K562 (cell line): ENCODE measurements at regions of chr12 and their contacts with region 1.

Region 1: GRCh38 chr12:101792051-101792931 is 38.5 kb downstream of the GNPTAB start:
- DNase-seq: no peak
- ATAC-seq: peak; percentile 55; the same call in 2 of the 3 replicates
- H3K4me3 ChIP-seq: no peak overlapping the region
- H3K27ac ChIP-seq: no peak overlapping the region; the same call in 2 of the 3 replicates
- H3K4me1 ChIP-seq: peaks cover 0 to 21% of the 10 kb centered on the region in 2 experiments; a peak in 3 of 5 replicates
- H3K27me3 ChIP-seq: no peaks in the 10 kb centered on the region
- CTCF ChIP-seq: peak in 2 of 3 experiments; percentile 19 to 43; a peak in 2 of 6 replicates
- EP300 ChIP-seq: no peak
- POLR2A ChIP-seq: no peak
- RAD21 ChIP-seq: peak in 1 of 2 experiments; percentile 48; a peak in 3 of 4 replicates

Region 2: DNA sequence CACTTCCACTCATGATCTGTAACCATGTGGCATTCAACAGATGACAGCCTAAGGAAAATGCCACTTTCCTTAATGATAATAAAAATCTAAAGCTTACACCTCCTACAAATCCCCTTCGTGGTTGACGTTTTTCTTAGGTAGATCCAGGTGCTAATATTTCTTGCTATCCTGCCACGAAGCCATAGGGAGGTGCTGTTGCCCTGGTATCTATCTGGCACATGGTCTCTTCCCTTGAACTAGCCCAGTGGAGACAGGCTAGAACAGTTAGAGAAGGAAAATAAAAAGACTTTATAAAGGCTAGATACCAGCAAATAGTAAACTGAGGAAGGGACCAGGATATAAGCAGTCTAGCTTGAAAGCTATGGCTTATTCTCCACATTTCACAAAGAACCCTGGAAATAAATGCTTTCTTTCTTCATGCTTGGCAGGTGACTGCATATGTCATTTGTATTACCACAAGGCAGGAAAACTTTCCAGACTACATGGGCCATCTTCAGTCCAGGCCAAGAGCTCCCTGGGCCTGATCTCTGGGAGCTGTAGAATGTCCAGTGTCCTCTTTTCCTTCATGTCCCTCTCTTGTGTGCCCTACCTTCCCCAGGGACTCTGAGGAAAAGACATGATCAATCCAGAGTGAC is 301.9 kb before region 1 on chr12:
- CTCF ChIA-PET with region 1: no interaction called
- POLR2A ChIA-PET with region 1: no interaction called
- in situ Hi-C with region 1: no loop called
- intact Hi-C with region 1: no loop called
- DNase-seq: peak in 2 of 4 experiments; percentile 18 to 21
- ATAC-seq: peak; percentile 83
- H3K4me3 ChIP-seq: no peak overlapping the region
- H3K27ac ChIP-seq: no peak overlapping the region
- H3K4me1 ChIP-seq: no peaks in the 10 kb centered on the region
- H3K27me3 ChIP-seq: peaks cover 0 to 6% of the 10 kb centered on the region in 2 experiments; a peak in 2 of 5 replicates
- CTCF ChIP-seq: peak; percentile 46 to 54 (median 50); a peak in 4 of 6 replicates
- EP300 ChIP-seq: no peak
- POLR2A ChIP-seq: no peak
- RAD21 ChIP-seq: peak; percentile 12 to 54; a peak in 2 of 4 replicates

Region 3: DNA sequence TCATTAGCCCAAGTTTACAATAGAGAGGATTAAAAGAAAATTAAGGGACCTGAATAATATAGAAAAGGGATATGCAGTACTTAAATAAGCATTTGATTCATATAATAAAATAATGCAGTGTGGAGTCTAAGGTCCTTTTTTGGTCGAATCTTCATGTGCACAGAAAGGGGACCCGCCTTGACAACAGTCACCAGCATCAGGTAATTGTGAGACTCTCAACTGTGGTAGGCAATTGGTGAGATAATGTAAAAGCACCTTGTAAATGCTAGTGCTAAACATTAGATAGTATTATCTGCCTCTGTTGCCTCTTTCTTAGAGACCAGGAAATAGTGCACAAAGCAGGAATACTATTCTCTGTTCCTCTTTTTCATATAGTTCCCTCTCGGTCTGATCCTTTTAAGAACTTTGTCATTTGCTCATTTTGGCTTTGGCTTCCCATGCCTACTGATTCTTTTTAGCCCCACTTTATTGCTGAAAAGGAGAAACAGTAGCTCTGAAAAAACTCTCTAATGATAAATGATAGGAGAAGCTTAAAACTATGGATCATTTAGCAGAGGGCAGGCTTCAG is 77.3 kb before region 1 on chr12:
- CTCF ChIA-PET with region 1: no interaction called
- POLR2A ChIA-PET with region 1: no interaction called
- in situ Hi-C with region 1: no loop called
- intact Hi-C with region 1: no loop called
- DNase-seq: no peak
- ATAC-seq: no peak
- H3K4me3 ChIP-seq: no peak overlapping the region
- H3K27ac ChIP-seq: no peak overlapping the region
- H3K4me1 ChIP-seq: peaks cover 3 to 14% of the 10 kb centered on the region in 2 experiments; a peak in 3 of 5 replicates
- H3K27me3 ChIP-seq: no peaks in the 10 kb centered on the region
- CTCF ChIP-seq: no peak
- EP300 ChIP-seq: no peak
- POLR2A ChIP-seq: no peak
- RAD21 ChIP-seq: no peak

Region 4: GRCh38 chr12:101747697-101748096 is 44.6 kb before region 1 on chr12:
- CTCF ChIA-PET with region 1: no interaction called
- POLR2A ChIA-PET with region 1: no interaction called
- in situ Hi-C with region 1: no loop called
- intact Hi-C with region 1: no loop called
- DNase-seq: no peak
- ATAC-seq: peak; percentile 30; the same call in 2 of the 3 replicates
- H3K4me3 ChIP-seq: no peak overlapping the region
- H3K27ac ChIP-seq: no peak overlapping the region
- H3K4me1 ChIP-seq: no peaks in the 10 kb centered on the region
- H3K27me3 ChIP-seq: no peaks in the 10 kb centered on the region
- CTCF ChIP-seq: no peak
- EP300 ChIP-seq: no peak
- POLR2A ChIP-seq: no peak
- RAD21 ChIP-seq: no peak

Region 5: GRCh38 chr12:101780599-101780998 is 11.7 kb before region 1 on chr12:
- CTCF ChIA-PET with region 1: no interaction called
- POLR2A ChIA-PET with region 1: interaction called, 10 read pairs
- in situ Hi-C with region 1: no loop called
- intact Hi-C with region 1: no loop called
- DNase-seq: no peak
- ATAC-seq: no peak
- H3K4me3 ChIP-seq: no peak overlapping the region
- H3K27ac ChIP-seq: no peak overlapping the region
- H3K4me1 ChIP-seq: no peaks in the 10 kb centered on the region
- H3K27me3 ChIP-seq: no peaks in the 10 kb centered on the region
- CTCF ChIP-seq: no peak
- EP300 ChIP-seq: no peak
- POLR2A ChIP-seq: no peak
- RAD21 ChIP-seq: no peak